PC-9 (cell line): ENCODE measurements at regions of chr10 and their contacts with region 1.

Region 1: GRCh38 chr10:33008499-33009243 is 50.6 kb upstream of the ITGB1 start:
- DNase-seq: peak; percentile 63 to 81
- H3K4me3 ChIP-seq: no peak overlapping the region
- H3K27ac ChIP-seq: peak overlapping the region; percentile 92
- H3K4me1 ChIP-seq: peaks cover 67% of the 10 kb centered on the region
- H3K27me3 ChIP-seq: no peaks in the 10 kb centered on the region
- CTCF ChIP-seq: peak; percentile 93

Region 2: GRCh38 chr10:32378363-32379317 is 630.0 kb before region 1 on chr10:
- CTCF ChIA-PET with region 1: no interaction called
- POLR2A ChIA-PET with region 1: interaction called, 5 read pairs
- intact Hi-C with region 1: loop called (anchors 5 kb)
- DNase-seq: peak; percentile 68 to 84
- H3K4me3 ChIP-seq: peak overlapping the region; percentile 88
- H3K27ac ChIP-seq: peak overlapping the region; percentile 79
- H3K4me1 ChIP-seq: peaks cover 17% of the 10 kb centered on the region
- H3K27me3 ChIP-seq: no peaks in the 10 kb centered on the region
- CTCF ChIP-seq: no peak

Region 3: GRCh38 chr10:32905466-32905865 is 103.2 kb before region 1 on chr10:
- CTCF ChIA-PET with region 1: no interaction called
- POLR2A ChIA-PET with region 1: interaction called, 3 read pairs
- intact Hi-C with region 1: loop called (anchors 2 kb)
- DNase-seq: no peak
- H3K4me3 ChIP-seq: no peak overlapping the region
- H3K27ac ChIP-seq: no peak overlapping the region
- H3K4me1 ChIP-seq: no peaks in the 10 kb centered on the region
- H3K27me3 ChIP-seq: no peaks in the 10 kb centered on the region
- CTCF ChIP-seq: no peak

Region 4: GRCh38 chr10:32985781-32986350 is 22.8 kb before region 1 on chr10:
- CTCF ChIA-PET with region 1: no interaction called
- POLR2A ChIA-PET with region 1: interaction called, 8 read pairs
- intact Hi-C with region 1: loop called (anchors 1 kb)
- DNase-seq: peak in 1 of 2 experiments; percentile 86
- H3K4me3 ChIP-seq: no peak overlapping the region
- H3K27ac ChIP-seq: peak overlapping the region; percentile 98
- H3K4me1 ChIP-seq: peaks cover 59% of the 10 kb centered on the region
- H3K27me3 ChIP-seq: no peaks in the 10 kb centered on the region
- CTCF ChIP-seq: no peak

Region 5: DNA sequence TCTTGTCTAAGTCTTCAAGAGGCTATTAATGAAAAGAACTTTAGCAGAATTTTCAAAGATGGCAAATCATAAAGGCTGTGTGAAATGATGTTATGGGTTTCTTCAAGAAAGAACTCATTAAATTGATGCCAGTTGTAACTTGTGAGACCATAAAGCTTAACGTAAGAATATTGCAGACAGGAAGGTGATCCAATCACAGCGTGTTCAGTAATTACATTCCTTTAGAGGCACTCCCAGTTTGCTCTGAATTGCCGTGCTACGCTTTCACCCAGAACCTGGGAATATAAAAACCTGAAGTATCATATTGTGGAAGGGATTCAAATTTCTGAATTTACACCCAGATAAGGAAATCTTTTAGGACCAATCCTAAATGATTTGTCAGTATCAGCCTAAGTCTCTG is 13.4 kb after region 1 on chr10:
- CTCF ChIA-PET with region 1: no interaction called
- POLR2A ChIA-PET with region 1: no interaction called
- intact Hi-C with region 1: no loop called
- DNase-seq: no peak
- H3K4me3 ChIP-seq: no peak overlapping the region
- H3K27ac ChIP-seq: no peak overlapping the region
- H3K4me1 ChIP-seq: no peaks in the 10 kb centered on the region
- H3K27me3 ChIP-seq: no peaks in the 10 kb centered on the region
- CTCF ChIP-seq: no peak

Region 6: GRCh38 chr10:33155720-33156638 is 147.3 kb after region 1 on chr10:
- CTCF ChIA-PET with region 1: interaction called, 3 read pairs
- POLR2A ChIA-PET with region 1: no interaction called
- intact Hi-C with region 1: loop called (anchors 1 kb)
- DNase-seq: peak; percentile 21 to 94
- H3K4me3 ChIP-seq: no peak overlapping the region; the same call in 1 of the 2 replicates
- H3K27ac ChIP-seq: peak overlapping the region; percentile 73
- H3K4me1 ChIP-seq: peaks cover 26% of the 10 kb centered on the region
- H3K27me3 ChIP-seq: no peaks in the 10 kb centered on the region
- CTCF ChIP-seq: peak; percentile 75

Region 7: DNA sequence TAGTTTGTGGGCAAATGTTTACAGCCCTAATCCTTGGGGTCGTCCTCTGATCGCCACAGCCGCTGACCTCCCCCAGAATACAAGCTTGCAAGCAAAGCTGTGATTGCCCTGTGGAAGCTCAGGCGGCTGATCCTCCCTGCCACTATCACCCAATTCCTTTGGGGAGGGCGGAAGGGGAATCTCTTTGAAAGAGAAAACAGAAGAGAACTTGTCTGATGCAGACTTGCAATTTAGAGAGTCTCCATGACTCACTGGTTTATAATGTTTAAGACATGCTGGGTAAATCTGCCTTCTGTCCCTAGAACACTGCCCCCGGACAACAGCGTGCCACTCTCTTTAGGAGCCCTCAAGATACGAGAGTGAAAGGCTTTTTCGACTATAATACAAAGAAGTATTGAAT is 250.3 kb after region 1 on chr10:
- CTCF ChIA-PET with region 1: no interaction called
- POLR2A ChIA-PET with region 1: no interaction called
- intact Hi-C with region 1: no loop called
- DNase-seq: no peak
- H3K4me3 ChIP-seq: no peak overlapping the region
- H3K27ac ChIP-seq: no peak overlapping the region
- H3K4me1 ChIP-seq: peaks cover 28% of the 10 kb centered on the region
- H3K27me3 ChIP-seq: no peaks in the 10 kb centered on the region
- CTCF ChIP-seq: no peak

Region 8: GRCh38 chr10:33291053-33291592 is 282.5 kb after region 1 on chr10:
- CTCF ChIA-PET with region 1: no interaction called
- POLR2A ChIA-PET with region 1: no interaction called
- intact Hi-C with region 1: loop called (anchors 1 kb)
- DNase-seq: peak; percentile 37 to 91
- H3K4me3 ChIP-seq: peak overlapping the region; percentile 31; the same call in 1 of the 2 replicates
- H3K27ac ChIP-seq: peak overlapping the region; percentile 99
- H3K4me1 ChIP-seq: peaks cover 48% of the 10 kb centered on the region
- H3K27me3 ChIP-seq: no peaks in the 10 kb centered on the region
- CTCF ChIP-seq: no peak